Thyroid gland (tissue), 4 donors: ENCODE measurements at regions of chr18 and their contacts with region 1.

Region 1: DNA sequence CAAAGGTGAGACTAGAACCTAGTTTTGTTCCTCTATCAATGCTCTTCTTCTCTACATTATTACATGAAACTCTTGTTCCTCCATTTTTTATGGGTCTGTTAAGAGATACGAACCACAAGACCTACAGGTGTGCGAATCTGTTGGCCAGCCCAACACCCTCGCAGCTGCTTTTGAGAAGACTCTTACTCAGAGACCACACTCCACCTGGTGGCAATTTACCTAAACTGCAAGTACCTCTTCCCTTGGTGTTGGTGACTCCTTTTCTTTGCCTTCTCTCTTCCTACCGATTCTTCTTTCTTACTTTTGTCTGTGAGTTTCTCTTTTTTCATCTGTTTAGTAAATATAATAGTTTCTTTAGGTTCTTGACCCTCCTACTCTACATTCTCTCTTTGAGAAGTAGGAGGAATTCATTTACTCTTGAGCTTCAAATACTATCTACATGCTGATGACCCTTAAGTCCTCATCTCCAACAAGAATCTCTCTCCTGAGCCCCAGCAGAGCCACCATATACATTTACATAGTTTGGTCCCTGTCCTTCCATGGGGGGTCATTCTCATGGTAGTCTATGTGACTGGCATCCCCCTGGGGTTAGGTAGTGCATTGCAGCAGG is 81.8 kb upstream of the GAREM1 start:
- DNase-seq: peak; percentile 62 to 66
- H3K4me3 ChIP-seq: no peak overlapping the region
- H3K27ac ChIP-seq: no peak overlapping the region
- H3K4me1 ChIP-seq: no peaks in the 10 kb centered on the region
- H3K27me3 ChIP-seq: no peaks in the 10 kb centered on the region
- CTCF ChIP-seq: peak; percentile 35 to 83 (median 65)
- POLR2A ChIP-seq: no peak

Region 2: DNA sequence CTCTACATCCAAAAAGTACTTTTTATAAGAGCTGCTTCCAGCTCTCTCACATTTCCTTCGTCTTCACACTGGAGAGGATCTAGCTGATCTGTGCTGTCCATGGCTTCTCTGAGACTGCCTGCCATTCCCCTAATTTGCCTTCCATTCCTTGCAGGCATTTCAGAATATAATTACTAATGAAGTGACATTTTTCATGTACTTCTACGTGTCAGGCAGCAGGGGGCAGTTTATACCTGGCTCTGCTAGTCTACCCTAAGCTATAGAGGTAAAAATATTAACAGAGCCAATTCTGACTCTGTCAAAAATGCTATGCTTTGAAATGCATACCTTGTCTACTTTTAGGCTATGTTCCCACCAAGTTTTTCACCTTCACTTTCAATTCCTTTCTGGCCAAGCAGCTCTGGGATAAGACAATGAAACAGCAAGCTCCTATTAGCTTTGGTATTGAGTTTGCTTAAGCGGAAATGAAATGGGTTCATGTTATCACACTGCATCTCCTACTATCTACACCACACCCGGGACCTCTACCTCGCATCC is 280.8 kb before region 1 on chr18:
- intact Hi-C with region 1: loop called (anchors 5 kb)
- DNase-seq: peak; percentile 8 to 34
- H3K4me3 ChIP-seq: no peak overlapping the region
- H3K27ac ChIP-seq: no peak overlapping the region
- H3K4me1 ChIP-seq: no peaks in the 10 kb centered on the region
- H3K27me3 ChIP-seq: no peaks in the 10 kb centered on the region
- CTCF ChIP-seq: peak; percentile 53 to 88 (median 74)
- POLR2A ChIP-seq: no peak